HEK293 (cell line): ENCODE measurements at regions of chr17 and their contacts with region 1.

Region 1: GRCh38 chr17:55527540-55528118 is 16.4 kb upstream of the SMIM36 start:
- H3K4me3 ChIP-seq: no peak overlapping the region
- H3K27ac ChIP-seq: no peak overlapping the region
- H3K4me1 ChIP-seq: no peaks in the 10 kb centered on the region
- CTCF ChIP-seq: peak; percentile 67; the same call in 1 of the 2 replicates

Region 2: GRCh38 chr17:55377671-55378275 is 149.9 kb before region 1 on chr17:
- CTCF ChIA-PET with region 1: no interaction called
- POLR2A ChIA-PET with region 1: no interaction called
- H3K4me3 ChIP-seq: no peak overlapping the region
- H3K27ac ChIP-seq: no peak overlapping the region
- H3K4me1 ChIP-seq: no peaks in the 10 kb centered on the region
- CTCF ChIP-seq: no peak

Region 3: DNA sequence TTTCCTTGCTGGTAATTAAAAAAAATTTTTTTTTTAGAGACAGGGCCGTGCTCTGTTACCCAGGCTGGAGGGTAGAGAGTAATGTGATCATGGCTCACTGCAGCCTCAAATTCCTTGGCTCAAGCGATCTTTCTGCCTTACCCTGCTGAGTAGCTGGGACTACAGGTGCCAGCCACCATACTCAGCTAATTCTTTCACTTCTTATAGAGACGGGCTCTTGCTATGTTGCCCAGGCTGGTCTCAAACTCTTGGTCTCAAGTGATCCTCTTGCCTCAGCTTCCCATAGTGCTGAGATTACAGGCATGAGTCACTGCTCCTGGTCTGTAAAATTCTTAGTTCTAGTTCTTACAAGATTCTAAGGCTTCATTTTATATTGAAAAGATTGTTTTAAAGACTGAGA is 27.5 kb before region 1 on chr17:
- CTCF ChIA-PET with region 1: no interaction called
- POLR2A ChIA-PET with region 1: no interaction called
- H3K4me3 ChIP-seq: no peak overlapping the region
- H3K27ac ChIP-seq: no peak overlapping the region
- H3K4me1 ChIP-seq: peaks cover 10% of the 10 kb centered on the region
- CTCF ChIP-seq: no peak

Region 4: GRCh38 chr17:55513885-55514591 is 13.6 kb before region 1 on chr17:
- CTCF ChIA-PET with region 1: interaction called, 16 read pairs
- POLR2A ChIA-PET with region 1: no interaction called
- H3K4me3 ChIP-seq: no peak overlapping the region
- H3K27ac ChIP-seq: no peak overlapping the region
- H3K4me1 ChIP-seq: no peaks in the 10 kb centered on the region
- CTCF ChIP-seq: peak; percentile 65

Region 5: GRCh38 chr17:55576996-55577586 is 49.5 kb after region 1 on chr17:
- CTCF ChIA-PET with region 1: no interaction called
- POLR2A ChIA-PET with region 1: no interaction called
- H3K4me3 ChIP-seq: no peak overlapping the region
- H3K27ac ChIP-seq: no peak overlapping the region
- H3K4me1 ChIP-seq: no peaks in the 10 kb centered on the region
- CTCF ChIP-seq: no peak

Region 6: DNA sequence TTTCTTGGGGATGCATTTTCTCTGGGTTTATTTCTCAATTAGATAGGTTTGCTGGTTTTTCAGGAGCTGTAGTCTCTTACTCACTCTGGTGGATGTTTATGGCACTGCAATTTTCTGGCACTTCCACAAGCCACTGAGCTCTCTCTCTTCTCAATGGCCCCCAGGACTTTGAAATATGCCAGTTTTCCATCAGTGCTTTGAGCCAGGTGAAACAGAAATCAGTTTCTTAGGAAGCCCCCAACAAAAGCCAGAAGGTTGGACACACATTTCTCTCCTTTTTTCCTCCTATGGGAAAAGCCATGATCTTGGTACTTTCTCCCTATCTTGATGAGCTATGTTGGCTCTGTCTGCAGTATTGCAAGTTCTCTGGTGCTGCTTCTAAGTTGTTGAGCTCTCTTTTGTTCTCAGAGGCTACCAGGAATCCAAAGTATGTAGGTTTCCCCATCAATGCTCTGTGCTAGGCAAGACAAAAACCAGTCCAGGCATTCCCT is 74.3 kb after region 1 on chr17:
- CTCF ChIA-PET with region 1: interaction called, 70 read pairs
- POLR2A ChIA-PET with region 1: no interaction called
- H3K4me3 ChIP-seq: no peak overlapping the region
- H3K27ac ChIP-seq: no peak overlapping the region
- H3K4me1 ChIP-seq: no peaks in the 10 kb centered on the region
- CTCF ChIP-seq: no peak

Region 7: DNA sequence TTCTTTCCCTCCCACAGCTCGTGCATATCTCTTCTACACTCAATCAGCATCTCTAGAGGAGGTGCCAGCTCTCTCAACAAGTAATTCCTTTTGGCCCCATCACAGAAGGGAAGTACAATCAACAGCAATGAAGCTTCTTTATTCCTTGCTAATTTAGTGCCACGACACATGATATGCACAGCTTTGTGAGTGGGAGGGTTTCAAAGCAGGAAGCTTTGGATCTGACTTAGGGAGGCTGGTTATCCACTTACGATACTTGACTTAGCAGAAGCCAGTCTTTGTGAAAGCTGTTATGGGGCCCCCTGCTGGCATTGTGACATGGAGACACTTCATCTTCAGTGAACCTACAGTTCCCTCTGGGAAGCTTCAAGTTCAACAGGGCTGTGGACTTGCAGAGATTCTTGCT is 114.0 kb after region 1 on chr17:
- CTCF ChIA-PET with region 1: interaction called, 34 read pairs
- POLR2A ChIA-PET with region 1: no interaction called
- H3K4me3 ChIP-seq: no peak overlapping the region
- H3K27ac ChIP-seq: no peak overlapping the region
- H3K4me1 ChIP-seq: peaks cover 5% of the 10 kb centered on the region; the same call in 1 of the 2 replicates
- CTCF ChIP-seq: no peak

Region 8: GRCh38 chr17:55717898-55718735 is 190.5 kb after region 1 on chr17:
- CTCF ChIA-PET with region 1: interaction called, 40 read pairs
- POLR2A ChIA-PET with region 1: no interaction called
- H3K4me3 ChIP-seq: no peak overlapping the region
- H3K27ac ChIP-seq: no peak overlapping the region
- H3K4me1 ChIP-seq: peaks cover 20% of the 10 kb centered on the region
- CTCF ChIP-seq: 0 out of 2 replicates have a peak, but pooled peaks have one; percentile 27

Region 9: GRCh38 chr17:55735731-55736405 is 208.2 kb after region 1 on chr17:
- CTCF ChIA-PET with region 1: interaction called, 36 read pairs
- POLR2A ChIA-PET with region 1: no interaction called
- H3K4me3 ChIP-seq: no peak overlapping the region
- H3K27ac ChIP-seq: no peak overlapping the region
- H3K4me1 ChIP-seq: peaks cover 28% of the 10 kb centered on the region
- CTCF ChIP-seq: peak; percentile 40; the same call in 1 of the 2 replicates